ENCODE measurements at regions of chr11 and their contacts with region 1.

Region 1: GRCh38 chr11:61844909-61845565 is 16.9 kb downstream of the FADS2 start:
- DNase-seq: no peak
- H3K27ac ChIP-seq: peak overlapping the region; percentile 42
- CTCF ChIP-seq: no peak

Region 2: GRCh38 chr11:61803889-61804647 is 41.0 kb before region 1 on chr11:
- CTCF ChIA-PET with region 1: no interaction called
- POLR2A ChIA-PET with region 1: no interaction called
- DNase-seq: no peak
- H3K27ac ChIP-seq: peak overlapping the region; percentile 14; the same call in 1 of the 2 replicates
- CTCF ChIP-seq: no peak

Region 3: GRCh38 chr11:61888043-61888442 is 43.0 kb after region 1 on chr11:
- CTCF ChIA-PET with region 1: no interaction called
- POLR2A ChIA-PET with region 1: interaction called, 14 read pairs
- DNase-seq: peak; percentile 84
- H3K27ac ChIP-seq: peak overlapping the region; percentile 90
- CTCF ChIP-seq: no peak

Region 4: DNA sequence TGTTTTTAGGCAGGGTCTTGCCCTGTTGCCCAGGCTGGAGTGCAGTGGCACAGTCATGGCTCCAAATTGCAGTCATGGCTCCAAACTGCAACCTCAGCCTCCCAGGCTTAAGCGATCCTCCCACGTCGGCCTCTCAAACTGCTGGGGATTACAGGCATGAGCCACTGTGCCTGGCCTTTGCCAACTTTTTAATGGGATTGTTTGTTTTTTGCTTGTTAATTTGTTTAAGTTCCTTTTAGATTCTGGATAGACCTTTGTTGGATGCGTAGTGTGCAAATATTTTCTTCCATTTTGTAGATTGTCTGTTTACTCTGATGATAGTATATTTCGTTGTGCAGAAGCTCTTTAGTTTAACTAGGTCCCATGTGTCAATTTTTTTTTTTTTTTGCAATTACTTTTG is 335.0 kb after region 1 on chr11:
- CTCF ChIA-PET with region 1: no interaction called
- POLR2A ChIA-PET with region 1: no interaction called
- DNase-seq: no peak
- H3K27ac ChIP-seq: no peak overlapping the region
- CTCF ChIP-seq: no peak